Activated naive CD4-positive, alpha-beta T cell treated with anti-CD3 and anti-CD28 coated beads, Interleukin-2, amount 10 ng/mL, durations not matched to agents 7 days and 5 days (primary cell): ENCODE measurements at regions of chr14 and their contacts with region 1.

Region 1: GRCh38 chr14:22986508-22987054 is 4.2 kb upstream of the AJUBA start:
- DNase-seq: peak; percentile 94
- H3K4me3 Mint-ChIP-seq: no peak overlapping the region
- H3K27ac Mint-ChIP-seq: no peak overlapping the region
- H3K4me1 Mint-ChIP-seq: no peaks in the 10 kb centered on the region
- H3K27me3 Mint-ChIP-seq: no peaks in the 10 kb centered on the region

Region 2: GRCh38 chr14:22822571-22823098 is 163.9 kb before region 1 on chr14:
- CTCF ChIA-PET with region 1: interaction called, 14 read pairs
- DNase-seq: peak; percentile 77
- H3K4me3 Mint-ChIP-seq: peak overlapping the region; percentile 46
- H3K27ac Mint-ChIP-seq: no peak overlapping the region
- H3K4me1 Mint-ChIP-seq: peaks cover 37% of the 10 kb centered on the region
- H3K27me3 Mint-ChIP-seq: peaks cover 58% of the 10 kb centered on the region

Region 3: DNA sequence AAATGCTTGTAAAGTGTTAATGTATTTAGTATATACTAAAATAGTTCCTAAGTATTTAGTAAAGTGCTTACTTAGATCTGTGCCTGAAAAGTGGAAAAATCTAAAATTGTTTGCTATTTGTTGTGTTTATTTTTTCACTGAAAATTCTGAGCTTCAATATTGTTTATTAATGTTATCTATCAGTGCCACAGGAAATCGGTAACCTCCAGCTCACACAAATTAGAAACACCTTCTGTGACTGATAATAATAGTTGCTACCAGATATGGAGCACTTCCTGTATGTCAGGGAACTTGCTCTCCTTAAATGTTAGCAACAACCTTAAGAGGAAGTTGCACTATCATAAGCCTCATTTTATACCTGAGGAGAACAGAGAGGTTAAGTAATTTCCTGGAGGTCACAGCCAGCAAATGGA is 115.8 kb before region 1 on chr14:
- CTCF ChIA-PET with region 1: no interaction called
- DNase-seq: no peak
- H3K4me3 Mint-ChIP-seq: peak overlapping the region; percentile 95
- H3K27ac Mint-ChIP-seq: peak overlapping the region; percentile 97
- H3K4me1 Mint-ChIP-seq: peaks cover 37% of the 10 kb centered on the region
- H3K27me3 Mint-ChIP-seq: peaks cover 4% of the 10 kb centered on the region

Region 4: GRCh38 chr14:22973217-22974032 is 13.2 kb before region 1 on chr14:
- CTCF ChIA-PET with region 1: interaction called, 120 read pairs
- DNase-seq: peak; percentile 60
- H3K4me3 Mint-ChIP-seq: no peak overlapping the region
- H3K27ac Mint-ChIP-seq: no peak overlapping the region
- H3K4me1 Mint-ChIP-seq: no peaks in the 10 kb centered on the region
- H3K27me3 Mint-ChIP-seq: peaks cover 12% of the 10 kb centered on the region

Region 5: DNA sequence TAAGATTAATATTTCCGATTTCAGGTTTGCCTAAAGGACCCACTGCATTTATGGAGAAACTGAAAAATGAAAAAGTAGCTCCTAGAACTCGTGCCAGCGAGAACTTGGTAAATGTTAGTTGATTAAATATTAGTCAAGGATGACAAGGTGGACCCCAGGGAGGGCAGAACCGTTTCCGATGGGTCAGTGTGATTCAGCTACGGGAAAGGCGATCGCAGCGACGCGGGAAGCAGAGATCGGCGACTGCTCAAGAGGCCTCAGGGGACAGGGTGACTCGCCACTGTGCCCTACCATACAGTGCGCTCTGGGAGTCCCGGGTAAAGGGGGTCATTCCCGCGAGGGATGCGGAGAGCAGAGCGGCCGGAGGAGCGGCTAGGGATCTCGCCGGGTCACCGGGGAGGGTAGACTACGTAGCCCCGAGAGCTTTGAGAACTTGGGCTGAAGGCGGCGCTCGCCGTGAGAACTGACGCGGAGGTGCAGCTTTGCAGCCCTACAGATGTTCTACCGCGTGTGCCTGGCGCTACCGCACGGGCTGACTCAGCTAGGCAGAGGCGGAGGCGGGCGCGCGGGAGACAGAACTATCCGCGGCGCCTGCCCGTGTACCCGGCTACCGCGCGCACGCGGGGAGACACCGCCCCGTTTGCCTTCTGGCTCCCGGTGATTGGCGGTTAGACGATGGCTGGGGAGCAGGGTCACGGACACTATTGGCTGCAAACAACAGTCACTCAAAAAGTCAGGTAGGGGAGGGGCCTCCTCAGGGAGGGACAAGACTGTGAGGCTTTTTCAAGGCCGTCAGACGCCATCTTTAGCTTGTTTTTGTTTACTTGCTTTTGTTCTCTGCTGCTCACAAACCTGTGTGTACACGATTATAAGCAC is 20.2 kb after region 1 on chr14:
- CTCF ChIA-PET with region 1: interaction called, 20 read pairs
- DNase-seq: peak; percentile 98
- H3K4me3 Mint-ChIP-seq: peak overlapping the region; percentile 96
- H3K27ac Mint-ChIP-seq: peak overlapping the region; percentile 98
- H3K4me1 Mint-ChIP-seq: peaks cover 53% of the 10 kb centered on the region
- H3K27me3 Mint-ChIP-seq: no peaks in the 10 kb centered on the region

Region 6: GRCh38 chr14:23025151-23025814 is 38.7 kb after region 1 on chr14:
- CTCF ChIA-PET with region 1: interaction called, 15 read pairs
- DNase-seq: no peak
- H3K4me3 Mint-ChIP-seq: no peak overlapping the region
- H3K27ac Mint-ChIP-seq: peak overlapping the region; percentile 56
- H3K4me1 Mint-ChIP-seq: peaks cover 67% of the 10 kb centered on the region
- H3K27me3 Mint-ChIP-seq: no peaks in the 10 kb centered on the region